ENCODE measurements at regions of chr4 and their contacts with region 1.

Region 1: GRCh38 chr4:38759113-38759789 is 23.5 kb downstream of the TLR10 start:
- DNase-seq: peak; percentile 58
- H3K4me3 ChIP-seq: no peak overlapping the region; a peak in 1 of 4 replicates
- H3K27ac ChIP-seq: no peak overlapping the region
- H3K4me1 ChIP-seq: no peaks in the 10 kb centered on the region; a peak in 1 of 4 replicates
- H3K27me3 ChIP-seq: no peaks in the 10 kb centered on the region
- CTCF ChIP-seq: peak; percentile 86
- EP300 ChIP-seq: no peak
- RAD21 ChIP-seq: peak; percentile 87

Region 2: DNA sequence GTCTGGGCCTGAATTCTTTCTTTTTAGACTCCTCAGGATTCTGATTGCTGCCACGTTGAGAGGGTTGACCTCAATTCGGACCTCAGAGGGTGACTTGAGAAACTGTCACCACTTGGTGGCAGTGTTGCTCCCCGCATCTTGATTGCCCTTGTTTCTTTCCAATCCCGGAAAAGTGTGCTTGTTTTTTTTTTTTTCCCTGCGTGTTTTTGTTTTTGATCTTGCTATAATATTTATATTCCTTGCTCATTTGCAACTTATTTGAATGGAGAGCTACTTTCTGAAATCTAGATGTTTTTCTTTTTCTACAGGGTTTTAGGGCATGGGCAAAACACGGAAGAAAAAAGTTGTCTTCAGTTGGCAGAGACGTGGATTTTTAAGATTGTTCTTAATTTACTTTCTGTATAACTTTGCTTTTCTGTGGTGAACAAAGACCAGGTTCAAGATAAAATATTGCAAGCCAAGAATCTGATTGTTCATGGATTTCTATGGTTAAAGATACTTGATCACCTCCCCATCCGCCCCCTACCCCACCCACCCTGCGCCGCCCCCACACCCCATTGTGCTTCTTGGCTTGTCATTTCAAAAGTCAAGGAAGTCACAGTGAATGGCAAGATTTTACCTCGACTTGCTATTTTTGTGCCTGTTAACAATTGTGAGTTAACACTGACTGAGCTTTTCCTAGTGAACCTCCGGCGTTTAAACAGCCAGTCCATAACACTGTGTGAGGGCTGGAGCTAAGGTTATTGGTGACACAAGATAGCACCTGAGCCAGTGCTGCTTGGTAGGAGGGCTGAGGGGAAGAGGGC is 697.0 kb before region 1 on chr4:
- CTCF ChIA-PET with region 1: interaction called, 11 read pairs
- POLR2A ChIA-PET with region 1: no interaction called
- DNase-seq: peak; percentile 71
- H3K4me3 ChIP-seq: peak overlapping the region; percentile 17 to 49; a peak in 2 of 4 replicates
- H3K27ac ChIP-seq: peak overlapping the region; percentile 78 to 89; a peak in 3 of 4 replicates
- H3K4me1 ChIP-seq: peaks cover 11 to 35% of the 10 kb centered on the region in 2 experiments; a peak in 3 of 4 replicates
- H3K27me3 ChIP-seq: no peaks in the 10 kb centered on the region
- CTCF ChIP-seq: peak; percentile 87
- EP300 ChIP-seq: no peak
- RAD21 ChIP-seq: peak; percentile 91

Region 3: GRCh38 chr4:38774181-38774955 is 15.1 kb after region 1 on chr4:
- CTCF ChIA-PET with region 1: interaction called, 37 read pairs
- POLR2A ChIA-PET with region 1: no interaction called
- DNase-seq: no peak
- H3K4me3 ChIP-seq: no peak overlapping the region
- H3K27ac ChIP-seq: no peak overlapping the region
- H3K4me1 ChIP-seq: no peaks in the 10 kb centered on the region
- H3K27me3 ChIP-seq: no peaks in the 10 kb centered on the region; the same call in 1 of the 2 replicates
- CTCF ChIP-seq: no peak
- EP300 ChIP-seq: no peak
- RAD21 ChIP-seq: no peak

Region 4: GRCh38 chr4:38782452-38783108 is 23.3 kb after region 1 on chr4 and contains the start of gene TLR10:
- CTCF ChIA-PET with region 1: interaction called, 88 read pairs
- POLR2A ChIA-PET with region 1: no interaction called
- DNase-seq: peak; percentile 53
- H3K4me3 ChIP-seq: peak within 1 kb of the TSS in 1 of 2 experiments; percentile 26; a peak in 1 of 4 replicates
- H3K27ac ChIP-seq: no peak within 1 kb of the TSS
- H3K4me1 ChIP-seq: no peaks in the 10 kb centered on the region
- H3K27me3 ChIP-seq: peaks cover 5% of the 10 kb centered on the region; the same call in 1 of the 2 replicates
- CTCF ChIP-seq: peak; percentile 67
- EP300 ChIP-seq: no peak
- RAD21 ChIP-seq: peak; percentile 72
- polyA plus RNA-seq, gene TLR10: not detected in 2 replicates

Region 5: GRCh38 chr4:38804654-38805295 is 45.5 kb after region 1 on chr4 and contains the start of gene TLR1:
- CTCF ChIA-PET with region 1: interaction called, 41 read pairs
- POLR2A ChIA-PET with region 1: no interaction called
- DNase-seq: peak; percentile 26
- H3K4me3 ChIP-seq: no peak within 1 kb of the TSS; a peak in 1 of 4 replicates
- H3K27ac ChIP-seq: no peak within 1 kb of the TSS
- H3K4me1 ChIP-seq: no peaks in the 10 kb centered on the region; a peak in 1 of 4 replicates
- H3K27me3 ChIP-seq: no peaks in the 10 kb centered on the region
- CTCF ChIP-seq: peak; percentile 67
- EP300 ChIP-seq: no peak
- RAD21 ChIP-seq: peak; percentile 48
- polyA plus RNA-seq, gene TLR1: 0.03 TPM in 1 of 2 replicates, not detected in the other

Region 6: GRCh38 chr4:38856524-38857337 is 97.5 kb after region 1 on chr4 and contains the start of gene TLR6:
- CTCF ChIA-PET with region 1: interaction called, 15 read pairs
- POLR2A ChIA-PET with region 1: no interaction called
- DNase-seq: peak; percentile 51
- H3K4me3 ChIP-seq: peak within 1 kb of the TSS in 1 of 2 experiments; percentile 39; a peak in 3 of 4 replicates
- H3K27ac ChIP-seq: peak within 1 kb of the TSS; percentile 43 to 93; a peak in 3 of 4 replicates
- H3K4me1 ChIP-seq: peaks cover 0 to 14% of the 10 kb centered on the region in 2 experiments
- H3K27me3 ChIP-seq: no peaks in the 10 kb centered on the region
- CTCF ChIP-seq: peak; percentile 70
- EP300 ChIP-seq: no peak
- RAD21 ChIP-seq: peak; percentile 51
- polyA plus RNA-seq, gene TLR6: 0.10 and 0.19 TPM in 2 replicates

Measured in SK-N-SH (cell line).